ENCODE measurements at regions of chr14 and their contacts with region 1.

Region 1: DNA sequence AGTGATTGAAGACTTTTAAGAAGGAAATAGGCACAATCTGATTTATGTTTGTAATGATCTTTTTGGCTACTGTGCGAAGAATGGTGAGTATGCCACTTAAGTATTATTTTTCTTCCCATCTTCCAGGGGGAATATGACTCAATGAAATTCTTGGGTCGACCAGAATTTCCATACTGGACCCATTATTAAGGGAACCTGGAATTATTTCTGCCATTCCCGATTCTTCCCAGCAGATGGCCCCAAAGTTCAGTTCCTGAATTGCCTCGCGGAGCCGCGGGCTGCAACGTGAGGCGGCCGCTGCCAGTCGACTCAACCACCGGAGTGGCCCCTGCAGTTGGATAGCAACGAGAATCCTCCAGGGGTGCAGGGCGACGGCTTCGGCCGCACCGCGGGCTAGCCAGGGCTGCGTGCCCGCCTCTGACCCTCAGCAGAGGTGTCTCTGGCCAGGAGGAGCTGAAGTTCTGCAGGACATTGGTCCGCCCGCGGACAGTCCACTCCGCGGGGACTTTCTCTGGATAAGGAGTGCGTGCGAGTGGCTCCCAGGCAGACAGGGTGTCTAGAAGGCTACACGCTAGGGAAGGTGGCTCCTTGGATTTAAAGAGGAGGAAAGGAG is 628 bp upstream of the TSHR start:
- DNase-seq: peak; percentile 81
- H3K4me3 Mint-ChIP-seq: peak overlapping the region; percentile 75
- H3K27ac Mint-ChIP-seq: no peak overlapping the region
- H3K4me1 Mint-ChIP-seq: peaks cover 32% of the 10 kb centered on the region
- H3K27me3 Mint-ChIP-seq: peaks cover 10% of the 10 kb centered on the region

Region 2: DNA sequence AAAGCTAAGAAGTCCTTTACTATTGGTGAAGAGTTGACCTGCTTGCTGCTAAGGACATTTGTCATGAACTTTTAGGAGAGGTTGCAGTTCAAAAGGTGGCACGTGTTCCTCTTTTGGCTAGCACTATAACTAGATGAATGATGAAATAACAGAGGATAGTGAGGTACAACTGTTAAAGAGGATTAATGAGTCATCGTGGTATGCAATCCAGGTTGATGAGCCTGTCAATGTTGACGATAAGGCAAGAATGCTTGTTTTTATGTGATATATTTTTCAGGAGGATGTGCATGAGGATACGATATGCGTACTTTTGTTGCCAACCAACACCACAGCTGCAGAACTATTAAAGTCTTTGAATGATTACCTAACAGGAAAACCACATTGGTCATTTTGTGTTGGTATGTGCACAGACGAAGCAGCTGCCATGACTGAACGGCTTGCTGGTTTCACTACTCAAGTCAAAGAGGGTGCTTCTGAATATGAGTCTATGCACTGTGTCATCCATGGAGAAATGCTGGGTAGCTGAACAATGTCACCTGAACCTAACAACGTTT is 23.9 kb before region 1 on chr14:
- CTCF ChIA-PET with region 1: no interaction called
- intact Hi-C with region 1: loop called (anchors 1 kb)
- DNase-seq: peak; percentile 79
- H3K4me3 Mint-ChIP-seq: peak overlapping the region; percentile 33
- H3K27ac Mint-ChIP-seq: peak overlapping the region; percentile 73
- H3K4me1 Mint-ChIP-seq: peaks cover 23% of the 10 kb centered on the region
- H3K27me3 Mint-ChIP-seq: no peaks in the 10 kb centered on the region

Region 3: GRCh38 chr14:81062816-81063215 is 108.0 kb after region 1 on chr14:
- CTCF ChIA-PET with region 1: no interaction called
- intact Hi-C with region 1: loop called (anchors 2 kb)
- DNase-seq: peak; percentile 43
- H3K4me3 Mint-ChIP-seq: no peak overlapping the region
- H3K27ac Mint-ChIP-seq: no peak overlapping the region
- H3K4me1 Mint-ChIP-seq: no peaks in the 10 kb centered on the region
- H3K27me3 Mint-ChIP-seq: peaks cover 6% of the 10 kb centered on the region

Region 4: DNA sequence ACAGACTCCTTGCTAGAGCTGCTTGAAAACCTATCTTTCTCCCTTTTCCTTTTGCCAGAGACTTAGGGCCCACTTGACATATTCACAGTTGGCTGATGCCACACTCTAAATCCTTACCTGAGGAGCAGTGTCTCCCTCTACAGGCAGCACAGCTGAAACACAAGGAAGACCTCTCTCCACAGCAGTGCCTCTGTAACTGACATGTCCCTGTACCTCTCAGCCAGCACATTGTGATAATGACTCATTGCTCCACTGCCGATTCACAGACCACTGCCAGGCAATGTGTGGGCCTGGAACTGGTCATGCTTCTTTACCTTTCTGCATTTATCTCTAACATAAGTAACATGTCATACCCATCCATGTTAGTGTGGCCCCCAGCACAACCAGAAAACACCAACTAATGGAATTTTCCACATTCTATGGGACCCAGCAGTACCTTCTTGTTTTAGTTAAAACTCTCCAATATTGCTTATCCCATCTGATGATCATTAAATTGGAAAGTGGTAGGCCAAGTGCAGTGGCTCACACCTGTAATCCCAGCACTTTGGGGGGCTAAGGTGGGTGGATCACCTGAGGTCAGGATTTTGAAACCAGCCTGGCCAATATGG is 209.5 kb after region 1 on chr14:
- CTCF ChIA-PET with region 1: interaction called, 3 read pairs
- intact Hi-C with region 1: loop called (anchors 1 kb)
- DNase-seq: peak; percentile 87
- H3K4me3 Mint-ChIP-seq: no peak overlapping the region
- H3K27ac Mint-ChIP-seq: no peak overlapping the region
- H3K4me1 Mint-ChIP-seq: peaks cover 10% of the 10 kb centered on the region
- H3K27me3 Mint-ChIP-seq: no peaks in the 10 kb centered on the region

Region 5: DNA sequence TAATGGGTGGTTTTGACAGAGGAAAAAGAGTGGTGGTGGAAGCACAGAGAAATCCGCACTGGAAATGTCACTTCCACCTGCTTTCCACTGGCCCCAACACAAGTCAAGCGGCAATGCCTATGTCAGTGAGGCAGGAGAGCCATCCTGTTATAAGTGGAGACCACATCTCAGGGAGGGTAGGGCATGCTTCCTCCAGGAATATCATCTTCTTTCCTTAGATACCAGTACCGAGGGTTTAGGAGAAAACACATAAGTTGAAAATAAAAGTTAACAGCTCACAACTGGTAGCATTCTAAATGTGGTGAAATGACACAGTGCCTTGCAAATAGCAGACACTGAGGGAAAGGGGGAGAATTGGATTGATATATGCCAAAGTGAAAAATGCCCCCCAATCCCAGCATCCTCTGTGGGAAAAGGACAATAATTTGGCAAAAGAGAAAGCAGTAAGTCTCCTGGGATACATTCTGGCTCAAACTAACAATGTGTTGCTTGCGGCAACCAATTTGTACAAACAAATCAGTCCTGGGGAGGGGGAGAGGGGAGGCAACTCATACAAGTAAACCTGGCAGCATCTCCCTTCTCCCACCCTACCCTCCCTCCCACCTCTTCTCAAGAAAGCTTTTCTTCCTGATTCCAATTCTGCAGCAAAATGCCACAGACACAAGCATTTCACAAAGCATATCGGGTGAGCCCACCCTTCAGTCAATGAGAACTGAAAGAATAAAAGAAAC is 388.2 kb after region 1 on chr14:
- CTCF ChIA-PET with region 1: no interaction called
- intact Hi-C with region 1: no loop called
- DNase-seq: no peak
- H3K4me3 Mint-ChIP-seq: no peak overlapping the region
- H3K27ac Mint-ChIP-seq: no peak overlapping the region
- H3K4me1 Mint-ChIP-seq: no peaks in the 10 kb centered on the region
- H3K27me3 Mint-ChIP-seq: peaks cover 13% of the 10 kb centered on the region

Region 6: GRCh38 chr14:81464247-81465002 is 509.6 kb after region 1 on chr14:
- CTCF ChIA-PET with region 1: no interaction called
- intact Hi-C with region 1: loop called (anchors 1 kb)
- DNase-seq: peak; percentile 75
- H3K4me3 Mint-ChIP-seq: peak overlapping the region; percentile 73
- H3K27ac Mint-ChIP-seq: peak overlapping the region; percentile 78
- H3K4me1 Mint-ChIP-seq: peaks cover 9% of the 10 kb centered on the region
- H3K27me3 Mint-ChIP-seq: no peaks in the 10 kb centered on the region

Measured in activated naive CD4-positive, alpha-beta T cell treated with anti-CD3 and anti-CD28 coated beads for 36 hours (primary cell).